Activated B cell treated with CpG ODN at 0.5 μM for 24 hours (primary cell): ENCODE measurements at regions of chr11 and their contacts with region 1.

Region 1: DNA sequence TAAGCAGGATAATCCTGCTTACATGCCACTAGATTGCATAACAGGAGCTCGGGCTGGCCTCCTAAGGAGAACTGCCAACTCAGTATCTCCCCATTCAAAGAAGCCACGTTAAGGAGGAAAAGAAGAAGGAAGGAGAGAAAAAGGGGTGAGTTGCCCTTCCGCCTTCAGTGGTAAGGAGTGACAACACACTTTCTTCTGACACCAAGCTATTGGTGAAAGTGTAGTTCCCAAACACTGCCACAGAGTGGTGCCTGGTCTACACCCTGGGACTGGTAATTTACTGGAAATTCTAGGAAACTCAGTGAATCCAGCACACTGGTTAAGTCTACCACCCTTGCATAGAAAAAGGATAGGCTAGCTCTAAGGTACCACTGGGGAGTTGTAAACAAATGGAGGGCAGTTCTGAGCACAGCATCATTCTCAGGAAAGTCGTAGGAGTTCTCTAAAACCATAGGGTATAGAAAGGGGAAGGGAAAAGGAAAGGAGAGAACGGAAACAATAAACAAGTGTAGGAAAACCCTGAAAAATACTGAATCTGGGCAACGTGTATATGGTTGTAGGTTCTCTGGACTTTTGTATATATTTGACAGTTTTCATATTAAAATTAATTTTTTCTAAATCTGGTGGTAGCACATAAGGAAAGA is 58.2 kb downstream of the RRAS2 start:
- DNase-seq: no peak
- ATAC-seq: peak; percentile 92
- H3K4me3 Mint-ChIP-seq: no peak overlapping the region
- H3K27ac Mint-ChIP-seq: no peak overlapping the region
- H3K4me1 Mint-ChIP-seq: peaks cover 60% of the 10 kb centered on the region
- H3K27me3 Mint-ChIP-seq: no peaks in the 10 kb centered on the region
- CTCF ChIP-seq: no peak

Region 2: GRCh38 chr11:14380947-14381561 is 80.3 kb after region 1 on chr11:
- CTCF ChIA-PET with region 1: interaction called, 18 read pairs
- POLR2A ChIA-PET with region 1: no interaction called
- intact Hi-C with region 1: no loop called
- DNase-seq: peak; percentile 64
- ATAC-seq: peak; percentile 96
- H3K4me3 Mint-ChIP-seq: peak overlapping the region; percentile 83
- H3K27ac Mint-ChIP-seq: peak overlapping the region; percentile 81
- H3K4me1 Mint-ChIP-seq: peaks cover 14% of the 10 kb centered on the region
- H3K27me3 Mint-ChIP-seq: no peaks in the 10 kb centered on the region
- CTCF ChIP-seq: no peak

Region 3: DNA sequence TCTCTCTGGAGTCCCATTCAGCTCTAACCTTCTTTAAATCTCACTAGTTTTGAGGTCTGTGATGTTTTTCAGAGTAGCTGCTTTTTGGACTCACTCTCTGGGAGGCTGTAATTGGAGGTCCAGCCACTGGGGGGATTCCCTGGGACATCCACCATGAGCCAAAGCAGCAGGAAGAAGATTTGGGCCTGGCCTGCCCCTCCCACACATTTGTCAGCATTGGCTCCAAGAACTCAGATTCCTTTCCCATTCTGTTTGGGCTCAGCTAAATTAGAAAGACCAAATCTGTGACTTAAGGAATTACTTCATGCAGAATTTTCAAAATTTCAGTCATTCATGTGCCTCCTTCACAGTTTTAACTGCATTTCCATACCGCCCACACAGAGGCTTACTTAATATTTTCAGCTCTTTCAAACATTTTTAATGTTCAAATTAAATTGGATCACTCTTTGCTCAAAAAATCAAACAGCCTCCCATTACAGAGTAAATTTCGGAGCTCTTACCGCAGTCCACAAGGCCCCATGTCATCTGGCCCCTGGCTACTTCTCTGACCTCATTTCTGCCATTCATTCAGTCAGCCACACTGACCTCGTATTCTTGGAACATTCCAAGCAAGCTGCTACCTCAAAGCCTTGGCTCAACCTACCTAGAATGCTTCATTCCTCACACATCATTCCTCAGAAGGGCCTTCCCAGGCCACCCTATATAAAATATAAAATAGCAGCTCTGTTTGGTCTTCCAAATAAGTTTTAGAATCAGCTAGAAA is 112.7 kb after region 1 on chr11:
- CTCF ChIA-PET with region 1: interaction called, 69 read pairs
- POLR2A ChIA-PET with region 1: no interaction called
- intact Hi-C with region 1: loop called (anchors 1 kb)
- DNase-seq: no peak
- ATAC-seq: no peak
- H3K4me3 Mint-ChIP-seq: no peak overlapping the region
- H3K27ac Mint-ChIP-seq: no peak overlapping the region
- H3K4me1 Mint-ChIP-seq: peaks cover 22% of the 10 kb centered on the region
- H3K27me3 Mint-ChIP-seq: no peaks in the 10 kb centered on the region
- CTCF ChIP-seq: no peak

Region 4: DNA sequence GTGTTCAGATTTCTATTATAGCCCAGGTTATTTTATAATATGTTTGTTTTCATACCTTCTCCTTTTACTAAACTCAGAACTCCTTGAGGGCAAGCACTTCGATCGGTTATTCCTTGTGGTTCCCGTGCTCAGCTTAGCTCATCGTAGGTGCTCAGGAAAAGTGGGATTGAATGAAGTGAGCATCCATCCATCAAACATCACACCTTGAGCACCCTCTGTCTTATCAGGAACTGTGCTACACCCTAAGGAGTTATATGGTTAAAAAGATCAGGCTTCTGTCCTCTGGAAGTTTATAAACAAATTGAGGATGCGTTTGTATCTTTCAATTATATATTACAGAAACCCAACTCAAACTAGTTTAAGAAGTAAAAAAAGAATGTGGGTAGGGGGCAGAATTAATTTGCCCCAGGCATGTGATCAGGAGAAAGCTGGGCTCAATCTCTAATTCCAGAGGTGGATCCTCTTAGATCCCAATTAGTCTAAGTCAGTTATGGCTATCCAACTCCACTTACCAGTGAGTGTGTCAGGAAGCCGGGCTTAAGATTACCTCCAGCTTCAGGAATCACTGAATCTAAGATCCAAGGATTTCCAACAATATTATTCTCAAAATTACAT is 118.1 kb after region 1 on chr11:
- CTCF ChIA-PET with region 1: interaction called, 69 read pairs
- POLR2A ChIA-PET with region 1: no interaction called
- intact Hi-C with region 1: loop called (anchors 1 kb)
- DNase-seq: no peak
- ATAC-seq: no peak
- H3K4me3 Mint-ChIP-seq: no peak overlapping the region
- H3K27ac Mint-ChIP-seq: no peak overlapping the region
- H3K4me1 Mint-ChIP-seq: peaks cover 16% of the 10 kb centered on the region
- H3K27me3 Mint-ChIP-seq: no peaks in the 10 kb centered on the region
- CTCF ChIP-seq: no peak

Region 5: GRCh38 chr11:14463623-14464022 is 162.8 kb after region 1 on chr11:
- CTCF ChIA-PET with region 1: interaction called, 14 read pairs
- POLR2A ChIA-PET with region 1: interaction called, 3 read pairs
- intact Hi-C with region 1: no loop called
- DNase-seq: no peak
- ATAC-seq: no peak
- H3K4me3 Mint-ChIP-seq: no peak overlapping the region
- H3K27ac Mint-ChIP-seq: no peak overlapping the region
- H3K4me1 Mint-ChIP-seq: no peaks in the 10 kb centered on the region
- H3K27me3 Mint-ChIP-seq: no peaks in the 10 kb centered on the region
- CTCF ChIP-seq: no peak